GM10248 (cell line): ENCODE measurements at regions of chr4 and their contacts with region 1.

Region 1: DNA sequence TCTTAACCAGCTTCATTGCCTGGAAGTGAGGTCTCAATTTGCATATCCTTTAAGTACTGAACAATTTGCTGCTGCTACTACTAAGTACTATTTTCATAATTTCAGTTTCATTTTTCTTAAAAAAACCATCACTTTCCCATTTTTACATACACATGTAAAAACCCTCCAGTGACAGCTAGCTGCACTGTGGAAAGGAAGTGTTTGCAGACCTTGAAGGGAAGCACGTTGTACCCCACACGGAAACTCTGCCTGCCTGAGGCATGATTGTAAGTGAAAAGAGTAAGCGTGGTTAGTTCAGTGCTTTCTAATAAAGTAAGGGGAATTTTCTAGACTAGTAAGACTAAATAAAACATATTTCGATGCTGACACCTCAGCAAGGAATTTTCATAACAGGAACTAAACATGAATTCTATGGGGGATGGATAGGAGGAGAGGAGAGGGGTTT is 103.6 kb downstream of the RAPGEF2 start:
- DNase-seq: peak; percentile 46
- CTCF ChIP-seq: no peak

Region 2: GRCh38 chr4:159191989-159192388 is 14.5 kb before region 1 on chr4:
- CTCF ChIA-PET with region 1: interaction called, 12 read pairs
- POLR2A ChIA-PET with region 1: no interaction called
- DNase-seq: no peak
- CTCF ChIP-seq: peak; percentile 29

Region 3: DNA sequence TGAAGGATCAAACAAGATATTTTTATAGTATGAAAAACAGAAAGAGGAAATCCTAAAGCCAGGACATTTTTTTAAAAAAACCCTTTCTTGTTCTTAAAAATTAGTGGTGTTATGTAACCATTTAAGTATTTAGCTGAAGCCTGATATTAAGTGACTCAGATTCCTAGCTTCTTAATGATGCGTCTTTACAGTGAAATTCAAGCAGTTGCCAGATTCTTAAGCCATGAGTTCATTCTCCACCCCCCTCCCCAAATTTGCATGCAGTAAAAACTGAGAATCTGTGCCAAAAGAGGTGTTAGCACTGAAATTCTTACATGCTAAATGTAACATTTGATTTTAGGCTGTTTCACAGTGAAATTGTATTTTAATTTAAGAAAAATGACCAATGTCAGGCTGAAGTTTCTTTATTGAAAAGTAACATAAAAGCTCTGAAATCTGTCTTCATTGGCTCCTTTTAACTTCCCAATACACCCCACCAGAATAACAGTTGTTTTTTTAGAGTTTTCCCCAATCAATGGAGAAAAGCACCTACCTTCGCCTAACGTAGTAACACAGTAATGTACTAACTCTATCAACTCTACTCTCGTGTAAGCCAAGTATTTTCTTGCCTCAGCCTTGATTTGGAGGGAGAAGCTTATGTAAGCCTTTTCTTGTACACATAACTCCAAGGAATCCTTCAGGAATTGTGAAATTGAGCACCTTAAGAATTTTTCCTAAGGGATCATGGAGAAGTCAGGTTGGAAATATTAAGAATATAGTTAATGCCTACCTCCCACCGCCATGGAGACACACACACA is 77.4 kb after region 1 on chr4:
- CTCF ChIA-PET with region 1: no interaction called
- POLR2A ChIA-PET with region 1: no interaction called
- DNase-seq: no peak
- CTCF ChIP-seq: no peak